HepG2 (cell line): ENCODE measurements at regions of chr22 and their contacts with region 1.

Region 1: GRCh38 chr22:36239401-36240171 is at the start of gene APOL2:
- DNase-seq: peak; percentile 94
- ATAC-seq: peak; percentile 98
- H3K4me3 ChIP-seq: peak within 1 kb of the TSS; percentile 71 to 94 (median 81)
- H3K27ac ChIP-seq: peak within 1 kb of the TSS; percentile 73
- H3K4me1 ChIP-seq: peaks cover 43% of the 10 kb centered on the region
- H3K27me3 ChIP-seq: no peaks in the 10 kb centered on the region; a peak in 1 of 5 replicates
- CTCF ChIP-seq: peak; percentile 91
- EP300 ChIP-seq: peak in 1 of 2 experiments; percentile 27; a peak in 1 of 4 replicates
- POLR2A ChIP-seq: peak; percentile 76 to 86
- RAD21 ChIP-seq: no peak
- total RNA-seq, gene APOL2: 28.7 and 34.3 TPM in 2 replicates

Region 2: GRCh38 chr22:36184433-36185025 is 55.1 kb before region 1 on chr22:
- CTCF ChIA-PET with region 1: no interaction called
- POLR2A ChIA-PET with region 1: no interaction called
- in situ Hi-C with region 1: no loop called
- intact Hi-C with region 1: no loop called
- DNase-seq: no peak
- ATAC-seq: no peak
- H3K4me3 ChIP-seq: no peak overlapping the region
- H3K27ac ChIP-seq: no peak overlapping the region
- H3K4me1 ChIP-seq: no peaks in the 10 kb centered on the region
- H3K27me3 ChIP-seq: peaks cover 3 to 21% of the 10 kb centered on the region in 2 experiments; a peak in 4 of 5 replicates
- CTCF ChIP-seq: no peak
- EP300 ChIP-seq: no peak
- POLR2A ChIP-seq: no peak
- RAD21 ChIP-seq: no peak

Region 3: GRCh38 chr22:36201630-36202319 is 37.8 kb before region 1 on chr22 and contains the start of gene APOL4:
- CTCF ChIA-PET with region 1: no interaction called
- POLR2A ChIA-PET with region 1: interaction called, 5 read pairs
- in situ Hi-C with region 1: no loop called
- intact Hi-C with region 1: loop called (anchors 5 kb)
- DNase-seq: no peak
- ATAC-seq: no peak
- H3K4me3 ChIP-seq: peak within 1 kb of the TSS in 1 of 3 experiments; percentile 56; a peak in 1 of 6 replicates
- H3K27ac ChIP-seq: no peak within 1 kb of the TSS
- H3K4me1 ChIP-seq: peaks cover 65% of the 10 kb centered on the region
- H3K27me3 ChIP-seq: no peaks in the 10 kb centered on the region; a peak in 1 of 5 replicates
- CTCF ChIP-seq: no peak
- EP300 ChIP-seq: no peak
- POLR2A ChIP-seq: no peak
- RAD21 ChIP-seq: no peak
- total RNA-seq, gene APOL4: 0.45 and 0.77 TPM in 2 replicates

Region 4: GRCh38 chr22:36252754-36253517 is 13.3 kb after region 1 on chr22 and contains the start of gene APOL1:
- CTCF ChIA-PET with region 1: no interaction called
- POLR2A ChIA-PET with region 1: interaction called, 102 read pairs
- in situ Hi-C with region 1: no loop called
- intact Hi-C with region 1: no loop called
- DNase-seq: peak; percentile 63
- ATAC-seq: peak; percentile 73
- H3K4me3 ChIP-seq: peak within 1 kb of the TSS; percentile 69 to 82 (median 71)
- H3K27ac ChIP-seq: peak within 1 kb of the TSS; percentile 90
- H3K4me1 ChIP-seq: peaks cover 98% of the 10 kb centered on the region
- H3K27me3 ChIP-seq: no peaks in the 10 kb centered on the region; a peak in 1 of 5 replicates
- CTCF ChIP-seq: no peak
- EP300 ChIP-seq: no peak
- POLR2A ChIP-seq: peak; percentile 23 to 64; a peak in 2 of 4 replicates
- RAD21 ChIP-seq: no peak
- total RNA-seq, gene APOL1: 11.2 and 20.3 TPM in 2 replicates

Region 5: GRCh38 chr22:36277482-36278291 is 38.1 kb after region 1 on chr22:
- CTCF ChIA-PET with region 1: no interaction called
- POLR2A ChIA-PET with region 1: interaction called, 3 read pairs
- in situ Hi-C with region 1: loop called (anchors 10 kb)
- intact Hi-C with region 1: loop called (anchors 2 kb)
- DNase-seq: peak; percentile 61
- ATAC-seq: peak; percentile 78
- H3K4me3 ChIP-seq: no peak overlapping the region
- H3K27ac ChIP-seq: peak overlapping the region; percentile 78
- H3K4me1 ChIP-seq: peaks cover 47% of the 10 kb centered on the region
- H3K27me3 ChIP-seq: no peaks in the 10 kb centered on the region
- CTCF ChIP-seq: peak; percentile 82
- EP300 ChIP-seq: no peak
- POLR2A ChIP-seq: no peak
- RAD21 ChIP-seq: peak; percentile 70

Region 6: DNA sequence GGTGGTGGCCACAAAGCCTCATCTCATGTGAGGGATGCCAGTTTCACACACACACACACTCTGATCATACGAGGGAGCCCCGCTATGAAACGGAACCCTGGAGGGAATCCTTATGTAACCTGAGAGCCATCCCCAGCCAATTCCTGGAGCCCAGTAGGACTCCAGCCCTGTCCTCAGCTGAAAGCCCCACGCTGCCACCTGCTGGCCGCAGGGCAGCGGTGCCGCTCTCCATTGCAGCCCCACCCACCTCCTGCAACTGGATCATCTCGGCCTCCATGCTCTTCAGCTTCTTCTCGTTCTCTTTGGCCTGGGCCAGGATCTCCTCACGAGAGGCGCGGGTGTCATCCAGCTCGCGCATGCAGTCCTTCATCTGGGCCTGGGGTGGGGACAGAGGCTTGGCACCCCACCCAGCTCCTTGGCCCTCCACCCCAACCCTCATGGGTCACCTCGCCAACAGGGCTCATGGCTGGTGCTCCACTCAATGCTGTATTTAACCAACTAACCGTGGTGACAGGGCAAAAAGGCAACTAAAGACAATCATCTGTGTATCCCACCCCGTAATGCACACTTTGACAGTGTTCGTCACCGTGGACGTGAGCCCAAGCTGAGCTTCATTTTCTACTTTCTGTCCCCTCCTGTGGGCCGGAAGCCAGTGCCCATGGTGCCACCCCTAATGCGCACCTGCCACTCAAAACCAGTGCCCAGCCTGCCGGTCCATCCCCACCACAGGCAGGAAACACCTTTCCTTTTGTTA is 47.1 kb after region 1 on chr22:
- CTCF ChIA-PET with region 1: no interaction called
- POLR2A ChIA-PET with region 1: no interaction called
- in situ Hi-C with region 1: loop called (anchors 10 kb)
- intact Hi-C with region 1: no loop called
- DNase-seq: peak; percentile 52
- ATAC-seq: peak; percentile 88
- H3K4me3 ChIP-seq: no peak overlapping the region
- H3K27ac ChIP-seq: no peak overlapping the region
- H3K4me1 ChIP-seq: no peaks in the 10 kb centered on the region
- H3K27me3 ChIP-seq: no peaks in the 10 kb centered on the region
- CTCF ChIP-seq: peak; percentile 96
- EP300 ChIP-seq: no peak
- POLR2A ChIP-seq: peak in 1 of 2 experiments; percentile 42; a peak in 1 of 4 replicates
- RAD21 ChIP-seq: peak; percentile 91